ENCODE measurements at regions of chr1 and their contacts with region 1.

Region 1: GRCh38 chr1:171226747-171227370 is 21.4 kb upstream of the FMO1 start:
- DNase-seq: peak in 2 of 10 donors; percentile 37 to 41
- H3K4me3 ChIP-seq: no peak overlapping the region
- H3K27ac ChIP-seq: no peak overlapping the region
- H3K27me3 ChIP-seq: no peaks in the 10 kb centered on the region
- CTCF ChIP-seq: peak; percentile 56 to 85 (median 76)

Region 2: GRCh38 chr1:170967042-170967910 is 259.6 kb before region 1 on chr1:
- intact Hi-C with region 1: loop called in 1 of 2 experiments (anchors 10 kb)
- DNase-seq: no peak
- H3K4me3 ChIP-seq: peak overlapping the region in 1 of 59 donors; percentile 28
- H3K27ac ChIP-seq: no peak overlapping the region
- H3K27me3 ChIP-seq: no peaks in the 10 kb centered on the region
- CTCF ChIP-seq: peak; percentile 42 to 82 (median 70)

Region 3: DNA sequence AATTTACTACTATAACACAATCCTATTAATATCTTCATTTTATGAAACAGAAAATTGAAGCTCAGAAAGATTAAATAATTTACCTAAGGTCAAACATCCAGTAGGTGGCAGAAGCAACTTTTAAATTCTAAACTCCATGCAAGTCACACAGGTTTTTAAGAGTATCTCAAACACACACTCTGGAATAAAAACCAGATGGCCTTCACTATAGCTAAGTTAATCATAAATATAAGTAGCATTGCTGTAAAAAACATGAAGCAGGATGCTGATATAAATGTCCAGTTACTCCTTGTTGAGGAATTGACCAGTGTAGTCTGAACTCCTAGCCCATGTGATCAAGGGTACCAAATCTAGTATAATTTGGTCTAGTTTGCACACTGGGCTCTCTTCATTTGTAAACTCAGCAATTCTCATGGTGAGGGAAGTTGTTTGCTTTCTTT is 145.5 kb before region 1 on chr1:
- intact Hi-C with region 1: loop called in 1 of 2 experiments (anchors 5 kb)
- DNase-seq: no peak
- H3K4me3 ChIP-seq: peak overlapping the region in 10 of 59 donors; percentile 0 to 33 (median 12)
- H3K27ac ChIP-seq: peak overlapping the region in 53 of 59 donors; percentile 4 to 87 (median 67)
- H3K27me3 ChIP-seq: no peaks in the 10 kb centered on the region
- CTCF ChIP-seq: peak; percentile 18 to 75 (median 53)

Measured in dorsolateral prefrontal cortex (tissue), 120 donors.